Gastrocnemius medialis (tissue), 4 donors: ENCODE measurements at regions of chr1 and their contacts with region 1.

Region 1: DNA sequence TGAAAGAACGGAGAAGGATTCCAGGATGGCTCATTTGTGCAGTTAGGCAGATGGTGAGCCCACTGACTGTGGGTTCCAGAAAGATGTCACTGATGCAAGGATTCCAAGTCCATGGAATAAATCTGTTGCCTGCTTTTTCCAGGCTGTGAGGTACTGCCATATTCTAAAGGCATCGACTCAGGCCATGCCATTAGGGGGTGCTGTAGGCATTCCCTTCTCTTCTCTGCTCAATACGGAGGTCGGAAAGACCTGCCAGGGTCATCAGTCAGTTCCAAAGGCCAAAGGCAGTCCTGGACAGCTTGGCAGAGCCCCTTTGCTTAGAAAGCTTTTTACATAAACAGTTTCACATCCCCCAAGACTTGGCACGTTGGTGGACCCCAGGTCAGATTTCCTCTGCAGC is 31.7 kb upstream of the TMEM125 start:
- DNase-seq: peak in 1 of 2 donors; percentile 44
- ATAC-seq: peak; percentile 66 to 80
- H3K4me3 ChIP-seq: no peak overlapping the region
- H3K27ac ChIP-seq: peak overlapping the region in 1 of 4 donors; percentile 18
- H3K4me1 ChIP-seq: no peaks in the 10 kb centered on the region
- H3K27me3 ChIP-seq: no peaks in the 10 kb centered on the region
- CTCF ChIP-seq: peak in 4 of 5 experiments; percentile 31 to 55 (median 53)
- POLR2A ChIP-seq: no peak

Region 2: GRCh38 chr1:43300378-43301094 is 62.5 kb after region 1 on chr1 and contains the start of gene TIE1:
- in situ Hi-C with region 1: no loop called
- intact Hi-C with region 1: loop called (anchors 5 kb)
- DNase-seq: no peak
- ATAC-seq: peak; percentile 45 to 69
- H3K4me3 ChIP-seq: peak within 1 kb of the TSS; percentile 47 to 54 (median 48)
- H3K27ac ChIP-seq: peak within 1 kb of the TSS; percentile 70 to 81 (median 74)
- H3K4me1 ChIP-seq: peaks cover 0 to 8% of the 10 kb centered on the region in 2 donors
- H3K27me3 ChIP-seq: no peaks in the 10 kb centered on the region
- CTCF ChIP-seq: no peak
- POLR2A ChIP-seq: peak; percentile 33 to 64
- total RNA-seq, gene TIE1: 15.9 to 27.9 (median 20.7) TPM

Region 3: GRCh38 chr1:43481491-43481890 is 243.4 kb after region 1 on chr1:
- in situ Hi-C with region 1: no loop called
- intact Hi-C with region 1: no loop called
- DNase-seq: no peak
- ATAC-seq: no peak
- H3K4me3 ChIP-seq: no peak overlapping the region
- H3K27ac ChIP-seq: no peak overlapping the region
- H3K4me1 ChIP-seq: no peaks in the 10 kb centered on the region
- H3K27me3 ChIP-seq: no peaks in the 10 kb centered on the region
- CTCF ChIP-seq: no peak
- POLR2A ChIP-seq: no peak